Activated T-helper 1 cell treated with anti-CD3 and anti-CD28 coated beads, Interleukin-12 subunit alpha, Interleukin-12 subunit beta, Interleukin-2, Interleukin-4 antibody, amounts not matched to agents 30 ng/mL and 10 ng/mL and 1 ng/mL, durations not matched to agents 14 hours and 24 hours and 36 hours (primary cell): ENCODE measurements at regions of chr1 and their contacts with region 1.

Region 1: DNA sequence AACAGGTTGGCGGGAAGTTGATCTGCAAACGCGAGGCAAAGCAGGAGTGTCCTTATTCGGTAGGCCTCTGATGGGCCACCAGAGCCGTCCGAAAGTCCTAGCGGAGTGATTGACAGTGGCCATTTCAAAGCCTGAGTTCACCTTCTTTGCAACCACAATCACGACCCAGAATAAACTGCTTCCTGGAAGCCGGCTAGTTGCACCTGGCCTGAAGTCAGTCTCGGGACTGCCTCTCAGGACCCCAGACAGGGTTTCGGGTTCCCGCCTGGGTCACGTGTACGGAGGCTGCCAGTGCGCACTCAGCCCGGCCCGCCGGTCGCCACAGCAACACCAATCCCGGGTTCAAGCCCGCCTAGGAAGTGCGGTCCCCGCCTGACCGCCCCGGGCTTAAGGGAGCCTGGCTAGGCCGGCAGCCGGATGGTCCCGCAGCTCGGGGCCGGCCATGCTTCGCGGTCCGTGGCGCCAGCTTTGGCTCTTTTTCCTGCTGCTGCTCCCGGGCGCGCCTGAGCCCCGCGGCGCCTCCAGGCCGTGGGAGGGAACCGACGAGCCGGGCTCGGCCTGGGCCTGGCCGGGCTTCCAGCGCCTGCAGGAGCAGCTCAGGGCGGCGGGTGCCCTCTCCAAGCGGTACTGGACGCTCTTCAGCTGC is at the start of gene TOR3A:
- DNase-seq: peak; percentile 77
- H3K4me3 Mint-ChIP-seq: peak within 1 kb of the TSS; percentile 99
- H3K27ac Mint-ChIP-seq: peak within 1 kb of the TSS; percentile 99
- H3K4me1 Mint-ChIP-seq: peaks cover 37% of the 10 kb centered on the region
- H3K27me3 Mint-ChIP-seq: no peaks in the 10 kb centered on the region
- total RNA-seq, gene TOR3A: 41.3 and 44.1 TPM in 2 replicates

Region 2: GRCh38 chr1:178542560-178543356 is 539.1 kb before region 1 on chr1:
- intact Hi-C with region 1: loop called (anchors 2 kb)
- DNase-seq: peak; percentile 81
- H3K4me3 Mint-ChIP-seq: peak overlapping the region; percentile 88
- H3K27ac Mint-ChIP-seq: peak overlapping the region; percentile 80
- H3K4me1 Mint-ChIP-seq: no peaks in the 10 kb centered on the region
- H3K27me3 Mint-ChIP-seq: no peaks in the 10 kb centered on the region

Region 3: GRCh38 chr1:179025125-179025974 is 56.5 kb before region 1 on chr1 and contains the start of gene FAM20B:
- intact Hi-C with region 1: loop called (anchors 1 kb)
- DNase-seq: peak; percentile 86
- H3K4me3 Mint-ChIP-seq: peak within 1 kb of the TSS; percentile 89
- H3K27ac Mint-ChIP-seq: peak within 1 kb of the TSS; percentile 82
- H3K4me1 Mint-ChIP-seq: peaks cover 43% of the 10 kb centered on the region
- H3K27me3 Mint-ChIP-seq: peaks cover 18% of the 10 kb centered on the region
- total RNA-seq, gene FAM20B: 36.6 and 39.2 TPM in 2 replicates

Region 4: GRCh38 chr1:179129702-179130473 is 48.1 kb after region 1 on chr1:
- intact Hi-C with region 1: loop called (anchors 1 kb)
- DNase-seq: no peak
- H3K4me3 Mint-ChIP-seq: peak overlapping the region; percentile 64
- H3K27ac Mint-ChIP-seq: peak overlapping the region; percentile 88
- H3K4me1 Mint-ChIP-seq: peaks cover 18% of the 10 kb centered on the region
- H3K27me3 Mint-ChIP-seq: no peaks in the 10 kb centered on the region

Region 5: GRCh38 chr1:179229214-179230140 is 147.7 kb after region 1 on chr1 and contains the start of gene ABL2:
- intact Hi-C with region 1: loop called (anchors 1 kb)
- DNase-seq: peak; percentile 47
- H3K4me3 Mint-ChIP-seq: peak within 1 kb of the TSS; percentile 88
- H3K27ac Mint-ChIP-seq: peak within 1 kb of the TSS; percentile 80
- H3K4me1 Mint-ChIP-seq: peaks cover 31% of the 10 kb centered on the region
- H3K27me3 Mint-ChIP-seq: no peaks in the 10 kb centered on the region
- total RNA-seq, gene ABL2: 9.5 and 11.4 TPM in 2 replicates

Region 6: DNA sequence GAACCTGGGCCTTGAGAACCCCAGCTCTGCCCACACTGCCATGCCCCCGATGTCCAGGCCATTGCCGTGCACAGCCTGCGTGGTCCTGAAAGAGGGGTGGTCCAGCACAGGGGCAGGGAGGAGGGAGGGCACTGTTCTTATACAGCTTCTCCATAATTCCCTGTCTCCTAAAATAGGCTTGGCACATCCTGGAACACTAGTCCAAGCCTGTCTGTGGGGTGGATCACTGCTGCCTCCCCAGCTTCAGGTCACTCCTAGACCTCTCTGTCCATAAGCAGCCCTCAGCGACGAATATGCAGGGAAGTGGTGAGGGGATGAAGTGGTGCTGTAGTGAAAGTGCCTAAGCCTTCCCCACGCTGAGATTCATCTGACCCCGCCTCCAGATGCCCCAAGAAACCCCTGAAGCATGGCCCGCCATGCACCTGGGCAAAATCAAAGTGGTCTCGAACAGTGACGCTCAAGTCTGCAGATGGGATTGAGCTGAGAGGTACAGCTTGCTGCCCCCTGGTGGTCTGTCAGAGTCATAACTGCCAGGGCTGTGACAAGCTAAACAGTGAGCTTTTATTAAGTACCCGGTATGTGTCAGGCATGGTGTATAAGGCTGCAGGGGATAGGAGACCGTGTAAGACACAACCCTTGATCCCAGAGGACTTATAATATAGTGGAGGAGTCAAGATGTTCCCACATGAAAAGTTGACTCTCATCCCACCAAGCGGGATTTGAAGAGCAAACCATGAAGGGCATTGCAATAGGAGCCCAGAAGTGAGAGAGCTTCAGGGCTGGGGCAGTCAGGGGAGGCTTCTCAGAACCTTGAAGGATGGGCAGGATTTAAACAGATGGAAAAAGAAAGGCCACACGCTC is 727.9 kb after region 1 on chr1:
- intact Hi-C with region 1: loop called (anchors 1 kb)
- DNase-seq: peak; percentile 43
- H3K4me3 Mint-ChIP-seq: no peak overlapping the region
- H3K27ac Mint-ChIP-seq: no peak overlapping the region
- H3K4me1 Mint-ChIP-seq: peaks cover 11% of the 10 kb centered on the region
- H3K27me3 Mint-ChIP-seq: peaks cover 6% of the 10 kb centered on the region